ENCODE measurements at regions of chr2 and their contacts with region 1.

Region 1: DNA sequence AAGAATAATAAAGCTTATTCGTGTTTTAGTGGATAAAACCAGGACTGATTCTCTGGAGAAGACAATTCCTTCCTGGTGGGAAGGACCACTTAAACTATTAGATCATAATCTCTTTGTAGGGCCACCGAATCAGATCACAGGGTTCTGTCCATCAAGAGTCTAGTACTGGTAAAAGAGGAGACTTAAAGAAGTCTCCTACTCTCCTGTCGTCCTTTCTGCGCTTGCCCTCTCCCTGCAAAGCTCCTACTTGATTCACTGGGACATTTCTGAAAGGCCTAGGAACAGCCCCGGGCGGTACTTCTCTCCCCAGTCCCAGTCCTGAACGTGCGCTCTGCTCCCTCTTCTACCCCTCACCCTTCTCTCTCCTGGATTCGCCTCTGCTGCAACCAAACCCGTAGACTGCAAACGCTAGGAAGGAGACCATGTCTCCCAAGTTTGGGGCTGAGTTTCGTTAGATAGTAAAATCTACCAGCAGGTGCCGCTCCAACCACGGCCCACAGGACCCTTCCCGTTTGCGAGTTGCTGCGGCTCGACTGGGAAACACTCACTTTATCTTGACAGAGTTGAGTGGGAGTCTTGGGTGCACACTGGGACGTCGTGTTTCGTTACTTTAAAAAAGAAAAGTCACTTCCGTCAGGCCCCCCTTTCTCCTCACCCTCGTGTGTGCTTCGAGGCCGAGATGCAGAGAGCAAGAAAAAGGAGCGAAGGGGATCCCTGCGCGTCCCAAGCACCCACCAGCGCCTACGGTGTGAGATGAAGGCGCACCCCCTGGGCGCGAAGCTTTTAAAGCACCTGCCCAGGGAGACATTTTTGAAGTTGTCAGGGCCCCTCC is 923 bp downstream of the FIGLA start:
- H3K4me3 Mint-ChIP-seq: peak overlapping the region; percentile 61
- H3K27ac Mint-ChIP-seq: peak overlapping the region; percentile 6
- H3K4me1 Mint-ChIP-seq: peaks cover 49% of the 10 kb centered on the region
- H3K27me3 Mint-ChIP-seq: peaks cover 32% of the 10 kb centered on the region

Region 2: GRCh38 chr2:70656421-70657010 is 133.0 kb before region 1 on chr2:
- intact Hi-C with region 1: loop called (anchors 2 kb)
- H3K4me3 Mint-ChIP-seq: no peak overlapping the region
- H3K27ac Mint-ChIP-seq: no peak overlapping the region
- H3K4me1 Mint-ChIP-seq: peaks cover 12% of the 10 kb centered on the region
- H3K27me3 Mint-ChIP-seq: peaks cover 39% of the 10 kb centered on the region

Region 3: DNA sequence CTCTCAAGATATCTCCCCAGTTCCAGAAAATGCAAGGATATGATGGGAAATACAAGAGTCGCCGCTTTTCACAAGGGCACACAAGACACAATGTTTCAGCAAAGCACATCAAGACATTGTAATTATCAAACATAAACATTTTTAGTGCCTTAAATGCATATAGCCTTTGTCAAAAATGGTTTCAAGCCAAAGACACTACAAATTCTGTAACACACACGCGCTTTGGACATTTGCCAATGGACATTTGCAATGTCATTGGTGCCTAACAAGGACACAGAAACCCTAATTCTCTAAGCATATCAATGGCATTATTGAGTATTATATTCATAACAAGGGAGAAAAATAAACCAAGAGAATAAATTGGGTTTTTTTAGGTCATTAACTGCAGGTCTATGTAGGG is 37.6 kb before region 1 on chr2:
- intact Hi-C with region 1: no loop called
- H3K4me3 Mint-ChIP-seq: no peak overlapping the region
- H3K27ac Mint-ChIP-seq: no peak overlapping the region
- H3K4me1 Mint-ChIP-seq: peaks cover 6% of the 10 kb centered on the region
- H3K27me3 Mint-ChIP-seq: peaks cover 7% of the 10 kb centered on the region

Region 4: GRCh38 chr2:70830366-70830765 is 40.8 kb after region 1 on chr2:
- intact Hi-C with region 1: loop called (anchors 5 kb)
- H3K4me3 Mint-ChIP-seq: no peak overlapping the region
- H3K27ac Mint-ChIP-seq: no peak overlapping the region
- H3K4me1 Mint-ChIP-seq: peaks cover 77% of the 10 kb centered on the region
- H3K27me3 Mint-ChIP-seq: peaks cover 16% of the 10 kb centered on the region

Region 5: DNA sequence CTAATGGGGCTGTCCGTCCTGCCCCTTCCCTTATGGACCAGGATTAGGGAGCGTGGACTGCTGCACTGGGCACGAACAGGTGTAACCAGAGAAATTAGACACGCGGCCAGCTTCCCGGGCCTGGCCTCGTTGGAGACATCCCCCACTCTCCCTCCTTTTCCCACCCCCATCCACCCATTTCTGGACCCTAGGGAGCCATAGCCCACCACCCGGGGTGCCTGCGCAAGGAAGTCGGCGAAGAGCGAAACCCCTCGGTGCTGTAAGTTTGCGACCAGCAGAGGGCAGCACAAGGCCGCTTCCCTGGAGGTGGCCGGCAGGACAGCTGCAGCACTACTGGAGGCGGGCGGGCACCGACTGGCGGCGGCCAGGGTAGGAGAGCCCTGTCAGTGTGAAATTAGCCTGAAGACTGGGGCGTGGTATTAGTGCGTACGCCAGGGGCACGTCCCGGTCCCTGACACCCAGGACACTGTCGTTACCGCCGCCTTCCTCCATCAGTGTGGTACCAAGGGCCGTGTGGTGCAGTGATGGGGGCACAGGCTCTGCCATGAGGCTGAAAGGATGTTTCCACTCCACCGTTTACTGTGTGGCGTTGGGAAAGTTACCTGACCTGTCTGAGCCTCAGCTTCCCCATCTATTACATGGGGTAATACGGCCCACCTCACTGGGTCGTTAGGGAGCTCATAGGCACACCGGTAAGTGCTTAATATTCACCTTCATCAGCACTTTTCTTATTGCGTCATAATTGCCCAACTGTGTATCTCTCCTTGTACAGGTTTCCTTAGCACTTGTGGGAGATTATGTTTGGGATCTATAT is 82.1 kb after region 1 on chr2:
- intact Hi-C with region 1: loop called (anchors 1 kb)
- H3K4me3 Mint-ChIP-seq: peak overlapping the region; percentile 39
- H3K27ac Mint-ChIP-seq: no peak overlapping the region
- H3K4me1 Mint-ChIP-seq: peaks cover 7% of the 10 kb centered on the region
- H3K27me3 Mint-ChIP-seq: peaks cover 58% of the 10 kb centered on the region

Region 6: DNA sequence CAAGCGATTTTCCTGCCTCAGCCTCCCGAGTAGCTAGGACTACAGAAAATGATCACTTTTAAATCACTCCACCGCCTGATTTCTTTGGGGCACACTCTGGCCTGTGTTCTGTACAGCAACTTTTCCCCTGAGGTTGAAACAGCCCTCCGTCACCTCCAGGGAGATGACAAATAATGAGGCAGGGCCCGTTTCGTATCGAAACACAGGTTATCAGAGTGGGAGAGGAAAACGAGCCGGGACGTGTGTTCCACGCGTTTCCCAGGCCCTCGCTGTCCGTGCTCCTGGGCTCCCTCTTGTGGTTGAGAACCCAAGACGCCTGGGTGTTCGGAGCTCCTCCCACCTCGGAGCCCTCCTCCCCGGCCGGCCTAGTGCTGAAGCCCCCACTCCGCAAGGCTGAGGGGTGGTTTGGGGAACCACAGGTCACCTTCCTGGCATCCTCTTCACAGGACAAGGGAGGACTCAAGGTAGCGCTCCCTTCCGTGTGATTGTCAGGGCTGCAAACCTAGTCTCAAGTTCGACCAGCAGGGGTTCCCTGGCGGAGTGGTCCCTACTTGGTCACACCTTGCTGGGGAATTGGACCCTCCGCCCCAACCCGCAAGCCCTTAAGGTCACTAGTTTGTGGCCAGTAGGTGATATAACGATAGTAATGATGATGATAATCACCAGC is 158.9 kb after region 1 on chr2:
- intact Hi-C with region 1: loop called (anchors 1 kb)
- H3K4me3 Mint-ChIP-seq: peak overlapping the region; percentile 61
- H3K27ac Mint-ChIP-seq: no peak overlapping the region
- H3K4me1 Mint-ChIP-seq: peaks cover 16% of the 10 kb centered on the region
- H3K27me3 Mint-ChIP-seq: peaks cover 62% of the 10 kb centered on the region